ENCODE measurements at regions of chr12 and their contacts with region 1.

Region 1: DNA sequence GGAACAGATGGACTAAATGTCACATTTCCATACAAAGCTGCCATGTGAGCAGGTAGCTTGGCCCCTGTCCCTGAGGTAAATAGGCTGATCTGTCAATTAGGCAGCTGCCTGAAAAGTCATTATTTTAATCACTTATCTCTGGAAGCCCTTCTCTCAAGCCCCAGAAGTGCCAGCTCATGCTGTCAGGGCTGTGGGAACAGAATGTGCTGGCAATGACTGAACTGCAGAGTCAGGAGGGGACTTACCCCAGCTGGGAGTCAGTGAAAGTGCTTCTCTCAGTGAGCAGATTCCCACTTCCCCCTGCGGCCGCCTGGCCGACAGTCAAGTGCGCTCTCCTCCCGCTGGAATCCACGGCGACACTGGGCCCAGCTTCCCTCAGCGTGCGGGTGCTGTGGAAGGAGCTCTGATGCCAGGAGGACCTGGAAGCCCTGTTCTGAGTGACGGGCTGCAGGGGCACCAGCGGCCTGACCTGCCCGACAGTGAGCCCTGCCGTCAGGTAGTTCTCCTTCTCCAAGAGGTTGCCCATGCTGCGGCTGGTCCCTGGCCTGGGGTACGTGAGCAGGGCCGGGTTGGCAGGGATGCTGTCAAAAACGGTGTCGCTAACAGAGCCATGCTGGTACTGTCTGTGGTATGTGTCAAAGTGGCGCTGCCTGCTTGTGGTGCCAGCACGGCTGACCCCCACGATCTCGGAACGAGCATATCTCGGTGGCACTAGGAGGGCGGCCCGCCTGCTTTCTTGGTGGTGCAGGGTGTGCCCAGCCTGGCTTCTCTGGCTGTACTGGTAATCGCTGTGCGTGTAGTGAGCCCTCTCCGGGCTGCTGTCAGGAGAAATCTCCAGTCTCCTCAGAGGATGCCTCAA is 18.7 kb downstream of the PKP2 start:
- DNase-seq: no peak
- ATAC-seq: 0 out of 2 replicates have a peak, but pooled peaks have one; percentile 34
- H3K4me3 ChIP-seq: no peak overlapping the region
- H3K27ac ChIP-seq: no peak overlapping the region
- H3K4me1 ChIP-seq: no peaks in the 10 kb centered on the region
- H3K27me3 ChIP-seq: peaks cover under 1% of the 10 kb centered on the region; the same call in 1 of the 2 replicates
- CTCF ChIP-seq: no peak

Region 2: DNA sequence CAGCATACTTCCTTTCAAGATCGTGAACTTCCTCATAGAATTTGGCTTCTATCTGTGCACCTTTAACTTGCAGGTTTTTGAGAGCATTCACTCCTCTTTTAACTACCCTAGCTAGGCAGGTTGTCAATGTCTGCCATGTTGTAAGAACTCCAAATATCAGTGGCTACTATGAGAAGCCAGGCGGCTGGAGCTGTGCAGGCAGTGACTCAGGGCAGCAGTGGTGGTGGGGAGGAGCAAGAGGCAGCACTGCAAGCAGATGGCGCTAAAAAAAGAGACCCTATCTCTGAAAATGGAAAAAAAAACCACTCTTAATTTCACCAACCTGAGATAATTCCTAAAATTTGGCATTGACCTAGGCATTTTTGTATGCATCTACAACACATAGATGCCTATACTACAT is 150.6 kb before region 1 on chr12:
- CTCF ChIA-PET with region 1: interaction called, 10 read pairs
- POLR2A ChIA-PET with region 1: no interaction called
- in situ Hi-C with region 1: no loop called
- intact Hi-C with region 1: no loop called
- DNase-seq: no peak
- ATAC-seq: no peak
- H3K4me3 ChIP-seq: no peak overlapping the region
- H3K27ac ChIP-seq: no peak overlapping the region
- H3K4me1 ChIP-seq: no peaks in the 10 kb centered on the region
- H3K27me3 ChIP-seq: no peaks in the 10 kb centered on the region
- CTCF ChIP-seq: no peak

Region 3: GRCh38 chr12:32947206-32948067 is 69.6 kb after region 1 on chr12:
- CTCF ChIA-PET with region 1: no interaction called
- POLR2A ChIA-PET with region 1: no interaction called
- in situ Hi-C with region 1: no loop called
- intact Hi-C with region 1: no loop called
- DNase-seq: peak; percentile 22
- ATAC-seq: peak; percentile 76; the same call in 1 of the 2 replicates
- H3K4me3 ChIP-seq: no peak overlapping the region
- H3K27ac ChIP-seq: no peak overlapping the region
- H3K4me1 ChIP-seq: no peaks in the 10 kb centered on the region
- H3K27me3 ChIP-seq: no peaks in the 10 kb centered on the region; the same call in 1 of the 2 replicates
- CTCF ChIP-seq: peak; percentile 45; the same call in 1 of the 2 replicates